Posterior vena cava (tissue), 2 donors: ENCODE measurements at regions of chr12 and their contacts with region 1.

Region 1: GRCh38 chr12:22002430-22002829 is 43.6 kb upstream of the CMAS start:
- DNase-seq: no peak

Region 2: GRCh38 chr12:21697904-21698630 is 304.4 kb before region 1 on chr12:
- intact Hi-C with region 1: loop called in 1 of 2 experiments (anchors 10 kb)
- DNase-seq: no peak

Region 3: DNA sequence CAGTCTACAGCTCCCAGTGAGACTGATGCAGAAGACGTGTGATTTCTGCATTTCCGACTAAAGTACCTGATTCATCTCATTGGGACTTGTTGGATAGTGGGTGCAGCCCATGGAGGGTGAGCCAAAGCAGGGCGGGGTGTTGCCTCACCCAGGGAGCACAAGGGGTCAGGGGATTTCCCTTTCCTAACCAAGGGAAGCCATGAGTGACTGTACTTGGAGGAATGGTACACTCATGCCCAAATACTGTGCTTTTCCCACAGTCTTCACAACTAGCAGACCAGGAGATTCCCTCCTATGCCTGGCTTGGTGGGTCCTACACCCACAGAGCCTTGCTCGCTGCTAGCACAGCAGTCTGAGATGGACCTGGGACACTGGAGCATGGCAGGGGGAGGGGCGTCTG is 40.2 kb before region 1 on chr12:
- intact Hi-C with region 1: no loop called
- DNase-seq: no peak

Region 4: DNA sequence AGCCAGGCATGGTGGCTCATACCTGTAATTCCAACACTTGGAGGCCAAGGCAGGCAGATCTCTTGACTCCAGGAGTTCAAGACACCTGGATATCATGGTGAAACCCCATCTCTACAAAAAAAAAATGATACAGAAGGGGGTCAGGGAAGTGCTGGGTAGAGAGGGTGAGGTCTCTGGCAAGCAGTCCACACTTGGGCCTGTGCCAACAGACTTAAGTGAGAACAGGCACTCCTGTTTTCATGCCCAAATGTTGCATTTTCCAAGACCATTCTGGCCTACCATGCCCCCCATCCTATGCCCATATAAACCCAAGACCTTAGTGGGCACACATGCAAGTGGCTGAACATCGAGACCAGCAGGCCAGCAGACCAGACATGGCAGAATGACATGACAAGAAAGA is 27.6 kb after region 1 on chr12:
- intact Hi-C with region 1: no loop called
- DNase-seq: no peak